ENCODE measurements at regions of chr17 and their contacts with region 1.

Region 1: DNA sequence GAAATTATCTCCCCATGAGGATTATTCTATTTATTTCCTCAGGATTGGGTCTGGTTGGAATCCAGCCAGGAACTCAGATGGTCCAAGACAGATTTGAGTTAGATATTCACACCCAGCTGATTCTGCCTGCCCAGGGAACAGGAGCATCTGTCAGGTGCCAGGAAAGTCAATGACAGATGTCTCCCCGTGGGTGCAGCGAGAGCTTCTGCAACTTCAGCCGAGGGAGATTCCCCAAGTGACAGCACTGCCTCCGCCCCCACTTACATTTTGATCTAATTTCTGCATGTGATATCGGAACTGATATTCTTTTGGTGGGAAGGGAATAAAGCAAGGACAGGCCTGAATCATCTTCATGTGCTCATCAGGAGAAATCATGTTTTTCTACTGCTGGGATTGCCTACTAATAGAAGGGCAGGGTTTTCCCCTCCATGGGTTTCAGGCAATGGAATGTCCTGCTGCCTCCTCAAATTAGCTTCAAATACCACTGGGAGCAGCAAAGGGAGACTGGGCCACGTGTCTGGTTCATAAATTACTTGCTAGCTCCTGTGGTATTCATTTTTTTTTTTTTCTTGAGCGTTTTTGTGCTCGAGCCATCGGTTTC is 15.7 kb upstream of the DHX8 start:
- DNase-seq: peak; percentile 85
- ATAC-seq: peak; percentile 74
- H3K4me3 ChIP-seq: no peak overlapping the region
- H3K27ac ChIP-seq: no peak overlapping the region
- H3K4me1 ChIP-seq: peaks cover 11% of the 10 kb centered on the region
- H3K27me3 ChIP-seq: no peaks in the 10 kb centered on the region
- CTCF ChIP-seq: no peak
- POLR2A ChIP-seq: no peak
- RAD21 ChIP-seq: no peak

Region 2: GRCh38 chr17:42997984-42998938 is 469.8 kb before region 1 on chr17 and contains the start of gene RPL27:
- CTCF ChIA-PET with region 1: no interaction called
- POLR2A ChIA-PET with region 1: no interaction called
- dilution Hi-C with region 1: no loop called
- in situ Hi-C with region 1: no loop called
- intact Hi-C with region 1: no loop called
- DNase-seq: peak; percentile 100
- ATAC-seq: peak; percentile 95
- H3K4me3 ChIP-seq: peak within 1 kb of the TSS; percentile 64
- H3K27ac ChIP-seq: peak within 1 kb of the TSS; percentile 86
- H3K4me1 ChIP-seq: peaks cover 6% of the 10 kb centered on the region
- H3K27me3 ChIP-seq: no peaks in the 10 kb centered on the region
- CTCF ChIP-seq: peak; percentile 88
- POLR2A ChIP-seq: peak; percentile 97
- RAD21 ChIP-seq: peak; percentile 67
- total RNA-seq, gene RPL27: 1,595 and 1,663 TPM in 2 replicates

Region 3: GRCh38 chr17:43393944-43394482 is 74.1 kb before region 1 on chr17:
- CTCF ChIA-PET with region 1: no interaction called
- POLR2A ChIA-PET with region 1: no interaction called
- dilution Hi-C with region 1: no loop called
- in situ Hi-C with region 1: no loop called
- intact Hi-C with region 1: loop called (anchors 1 kb)
- DNase-seq: peak; percentile 83
- ATAC-seq: peak; percentile 47
- H3K4me3 ChIP-seq: no peak overlapping the region
- H3K27ac ChIP-seq: peak overlapping the region; percentile 52
- H3K4me1 ChIP-seq: peaks cover 5% of the 10 kb centered on the region
- H3K27me3 ChIP-seq: no peaks in the 10 kb centered on the region
- CTCF ChIP-seq: peak; percentile 97
- POLR2A ChIP-seq: 0 out of 2 replicates have a peak, but pooled peaks have one; percentile 47
- RAD21 ChIP-seq: peak; percentile 99

Region 4: DNA sequence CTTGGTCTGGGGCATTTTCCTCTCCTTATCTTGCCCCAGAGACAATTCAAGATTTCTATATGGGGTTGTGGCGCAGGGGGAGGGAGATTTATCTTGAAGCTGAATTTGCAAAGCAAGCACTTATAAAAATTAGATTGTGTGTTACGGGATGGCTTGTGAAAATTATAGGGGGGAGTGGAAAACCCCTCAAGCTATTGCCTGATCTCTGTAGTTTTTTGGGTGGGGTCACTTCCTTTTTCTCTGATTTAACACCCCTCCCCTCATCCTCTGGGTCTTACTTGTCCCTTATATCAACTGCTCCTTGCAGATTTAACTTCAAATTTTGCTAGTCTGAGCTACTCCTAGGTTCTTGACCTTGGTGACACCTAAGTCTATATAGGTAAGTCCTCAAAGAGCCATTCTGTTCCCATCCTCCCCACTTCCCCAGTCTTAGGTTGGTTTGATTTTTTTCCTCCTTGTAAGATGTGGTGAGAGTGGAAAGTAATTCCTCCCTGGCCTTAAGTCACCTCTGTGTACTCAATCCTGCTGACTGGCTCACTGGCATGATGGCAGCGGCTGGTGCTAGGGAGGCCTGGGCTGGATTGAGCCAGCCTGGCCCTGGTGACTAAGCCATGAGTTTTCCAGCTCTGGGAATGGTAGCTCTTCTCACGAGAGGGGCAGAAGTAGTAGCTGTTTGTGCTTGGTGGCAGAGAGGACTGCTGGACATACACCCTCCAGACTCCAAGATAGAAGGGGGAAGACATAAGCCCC is 67.0 kb before region 1 on chr17:
- CTCF ChIA-PET with region 1: no interaction called
- POLR2A ChIA-PET with region 1: interaction called, 4 read pairs
- dilution Hi-C with region 1: no loop called
- in situ Hi-C with region 1: no loop called
- intact Hi-C with region 1: loop called (anchors 2 kb)
- DNase-seq: peak; percentile 88
- ATAC-seq: peak; percentile 70
- H3K4me3 ChIP-seq: peak overlapping the region; percentile 82; the same call in 1 of the 2 replicates
- H3K27ac ChIP-seq: peak overlapping the region; percentile 35
- H3K4me1 ChIP-seq: peaks cover 19% of the 10 kb centered on the region
- H3K27me3 ChIP-seq: no peaks in the 10 kb centered on the region
- CTCF ChIP-seq: no peak
- POLR2A ChIP-seq: peak; percentile 48; the same call in 1 of the 2 replicates
- RAD21 ChIP-seq: peak; percentile 33

Region 5: GRCh38 chr17:43418441-43419374 is 49.4 kb before region 1 on chr17:
- CTCF ChIA-PET with region 1: no interaction called
- POLR2A ChIA-PET with region 1: no interaction called
- dilution Hi-C with region 1: no loop called
- in situ Hi-C with region 1: no loop called
- intact Hi-C with region 1: loop called (anchors 5 kb)
- DNase-seq: peak; percentile 92
- ATAC-seq: peak; percentile 96
- H3K4me3 ChIP-seq: no peak overlapping the region
- H3K27ac ChIP-seq: peak overlapping the region; percentile 72
- H3K4me1 ChIP-seq: peaks cover 20% of the 10 kb centered on the region
- H3K27me3 ChIP-seq: peaks cover under 1% of the 10 kb centered on the region; the same call in 1 of the 2 replicates
- CTCF ChIP-seq: no peak
- POLR2A ChIP-seq: no peak
- RAD21 ChIP-seq: peak; percentile 33; the same call in 1 of the 2 replicates

Region 6: DNA sequence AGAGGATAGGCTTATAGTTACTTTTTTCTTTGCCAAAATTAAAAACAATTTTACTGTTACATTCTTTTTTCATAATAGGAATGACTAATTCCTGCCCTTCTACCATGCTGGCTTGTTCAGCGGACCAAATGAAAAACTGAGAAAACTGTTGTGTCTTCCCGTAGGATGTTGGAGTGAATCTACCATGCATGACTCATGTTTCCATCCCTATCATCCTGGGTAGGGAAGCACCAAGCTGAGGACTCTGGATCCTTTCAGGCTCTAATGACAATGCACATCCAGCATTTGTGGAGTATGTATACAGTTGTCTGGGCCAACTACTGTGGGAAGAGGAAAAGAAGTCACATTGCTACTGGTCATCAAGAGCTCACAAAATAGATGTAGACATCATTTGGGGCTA is 25.4 kb before region 1 on chr17:
- CTCF ChIA-PET with region 1: no interaction called
- POLR2A ChIA-PET with region 1: no interaction called
- dilution Hi-C with region 1: no loop called
- in situ Hi-C with region 1: no loop called
- intact Hi-C with region 1: no loop called
- DNase-seq: peak; percentile 80
- ATAC-seq: peak; percentile 81
- H3K4me3 ChIP-seq: no peak overlapping the region
- H3K27ac ChIP-seq: no peak overlapping the region
- H3K4me1 ChIP-seq: peaks cover 7% of the 10 kb centered on the region
- H3K27me3 ChIP-seq: no peaks in the 10 kb centered on the region
- CTCF ChIP-seq: no peak
- POLR2A ChIP-seq: no peak
- RAD21 ChIP-seq: no peak

Measured in IMR-90 (cell line).